AG04450 (cell line): ENCODE measurements at regions of chr1 and their contacts with region 1.

Region 1: GRCh38 chr1:112619520-112620376 is at the start of gene CAPZA1:
- DNase-seq: peak; percentile 78
- H3K4me3 ChIP-seq: peak within 1 kb of the TSS; percentile 98
- H3K27ac ChIP-seq: peak within 1 kb of the TSS; percentile 96
- H3K27me3 ChIP-seq: no peaks in the 10 kb centered on the region
- CTCF ChIP-seq: no peak
- polyA plus RNA-seq, gene CAPZA1: 195 and 273 TPM in 2 replicates

Region 2: DNA sequence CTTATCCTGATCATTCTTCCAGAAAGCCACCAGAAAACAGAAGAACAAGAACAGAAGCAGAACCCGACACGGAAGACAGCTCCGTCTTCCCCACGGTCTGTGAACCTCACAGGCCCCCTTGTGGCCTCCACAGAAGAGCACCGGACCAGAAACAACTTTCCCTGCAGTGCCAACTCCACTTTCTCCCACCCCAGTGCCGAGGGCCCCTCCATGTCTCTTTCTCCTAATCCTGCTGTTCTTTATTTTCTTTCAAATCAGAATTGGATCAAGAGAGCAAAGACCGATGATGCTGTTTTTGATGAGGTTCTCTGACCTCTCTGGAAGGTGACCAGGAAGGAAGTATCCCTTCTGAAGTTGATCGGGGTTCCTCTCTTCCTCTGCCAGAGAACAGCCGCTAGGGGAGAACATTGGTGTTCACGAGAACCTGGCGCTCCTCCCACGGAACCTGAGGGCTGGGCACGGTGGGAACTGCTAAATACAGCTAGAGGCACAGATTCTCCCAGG is 282.7 kb before region 1 on chr1:
- CTCF ChIA-PET with region 1: no interaction called
- POLR2A ChIA-PET with region 1: no interaction called
- DNase-seq: peak; percentile 11
- H3K4me3 ChIP-seq: no peak overlapping the region
- H3K27ac ChIP-seq: no peak overlapping the region
- H3K27me3 ChIP-seq: peaks cover 36% of the 10 kb centered on the region
- CTCF ChIP-seq: peak; percentile 69

Region 3: DNA sequence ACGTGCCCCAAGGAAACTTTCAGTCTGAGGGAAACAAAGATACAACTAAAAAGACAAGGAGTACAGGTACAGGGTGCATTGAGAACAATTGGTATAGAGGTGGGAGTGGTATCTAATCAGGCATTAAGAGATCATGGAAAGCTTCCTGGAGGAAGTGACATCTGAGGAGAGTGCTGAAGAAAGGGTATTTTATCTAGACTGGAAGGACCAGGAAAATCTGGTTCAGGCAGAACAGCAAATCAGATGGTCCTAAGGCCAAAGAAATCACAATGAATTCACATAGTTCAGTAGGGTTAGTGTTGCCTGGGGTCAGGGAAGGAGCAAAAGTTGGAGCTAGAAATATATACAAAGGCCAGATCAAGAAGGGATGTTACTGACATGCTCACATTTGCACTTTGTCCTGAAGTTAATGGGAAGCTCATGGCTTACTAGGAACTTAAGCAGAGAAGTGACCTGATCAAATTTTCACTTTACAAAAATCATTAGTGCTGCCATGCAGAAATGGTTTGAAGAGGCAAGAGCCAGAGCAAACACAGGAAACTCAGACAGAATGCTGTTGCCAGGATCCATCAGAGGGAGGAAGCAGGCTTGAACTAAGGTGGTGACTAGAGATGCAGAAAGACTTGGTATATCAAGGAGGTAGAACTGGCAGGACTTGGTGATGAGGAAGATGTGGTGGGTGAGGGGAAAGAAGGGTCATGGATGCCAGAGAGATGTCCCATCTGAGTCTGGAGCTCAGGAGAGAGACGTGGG is 238.2 kb before region 1 on chr1:
- CTCF ChIA-PET with region 1: no interaction called
- POLR2A ChIA-PET with region 1: no interaction called
- DNase-seq: no peak
- H3K4me3 ChIP-seq: no peak overlapping the region
- H3K27ac ChIP-seq: no peak overlapping the region
- H3K27me3 ChIP-seq: peaks cover 44% of the 10 kb centered on the region
- CTCF ChIP-seq: no peak

Region 4: DNA sequence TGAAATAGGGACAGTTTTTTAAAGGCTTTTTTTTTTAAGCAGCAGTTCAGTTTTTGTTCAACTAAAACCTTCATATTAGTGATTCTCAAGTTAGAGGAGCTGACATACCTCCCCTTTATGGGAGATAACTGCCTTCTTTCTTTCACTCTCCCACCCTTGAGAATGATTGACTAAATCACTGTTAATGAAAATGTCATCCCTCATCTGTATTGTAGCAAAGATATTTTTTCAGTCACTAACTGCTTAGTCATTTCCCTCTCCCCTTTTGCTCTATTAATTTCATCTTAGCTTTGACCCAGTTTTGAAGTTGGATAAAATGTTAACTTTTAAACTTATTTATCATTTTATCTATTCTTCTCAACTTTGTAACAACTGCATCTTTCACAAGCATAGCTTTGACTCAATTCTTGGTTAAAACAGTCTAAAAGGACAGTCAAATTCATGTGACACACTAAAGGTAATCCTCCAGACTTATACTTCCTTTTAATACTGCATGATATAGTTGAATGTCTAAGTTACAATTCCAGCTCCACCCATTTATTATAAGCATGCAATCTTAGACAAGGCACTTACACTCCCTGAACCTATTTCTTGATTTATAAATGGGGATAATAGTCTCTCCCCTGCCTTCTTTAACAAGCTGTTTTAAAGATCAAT is 17.0 kb after region 1 on chr1:
- CTCF ChIA-PET with region 1: no interaction called
- POLR2A ChIA-PET with region 1: no interaction called
- DNase-seq: no peak
- H3K4me3 ChIP-seq: no peak overlapping the region
- H3K27ac ChIP-seq: no peak overlapping the region
- H3K27me3 ChIP-seq: no peaks in the 10 kb centered on the region
- CTCF ChIP-seq: no peak

Region 5: GRCh38 chr1:112651205-112651604 is 31.5 kb after region 1 on chr1:
- CTCF ChIA-PET with region 1: interaction called, 13 read pairs
- POLR2A ChIA-PET with region 1: no interaction called
- DNase-seq: no peak
- H3K4me3 ChIP-seq: no peak overlapping the region
- H3K27ac ChIP-seq: no peak overlapping the region
- H3K27me3 ChIP-seq: no peaks in the 10 kb centered on the region
- CTCF ChIP-seq: no peak

Region 6: DNA sequence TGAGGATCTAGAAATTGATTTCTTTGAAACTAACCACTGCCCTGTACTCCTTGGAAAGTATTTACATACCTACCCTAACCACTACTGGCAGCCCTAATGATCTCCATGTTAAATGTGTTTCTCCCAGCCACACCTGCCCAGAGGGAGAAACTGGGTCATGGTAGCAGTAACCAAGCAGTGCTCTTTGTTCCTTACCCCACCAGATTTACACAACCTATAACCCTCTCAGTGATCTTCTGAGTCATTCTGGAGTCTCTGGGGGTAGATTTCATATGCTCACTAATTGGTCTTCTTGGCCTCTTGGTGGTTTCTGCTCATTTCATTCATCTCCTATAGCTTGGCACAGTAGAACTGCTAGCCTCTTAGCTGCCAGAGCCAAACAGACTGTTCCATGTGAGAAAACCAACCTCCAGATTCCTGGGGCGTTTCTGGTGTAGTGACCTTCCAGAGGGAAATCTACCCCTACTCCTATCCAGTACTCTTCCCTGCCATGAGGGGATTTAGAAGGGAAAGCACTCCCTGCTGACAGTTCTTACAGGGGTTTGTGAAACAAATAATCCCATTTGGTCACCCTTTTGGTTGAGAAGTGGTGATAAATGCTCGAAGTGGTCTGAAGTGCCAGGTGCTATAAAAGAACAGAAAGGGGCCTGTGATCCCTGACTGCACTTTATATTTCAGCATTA is 417.0 kb after region 1 on chr1:
- CTCF ChIA-PET with region 1: interaction called, 11 read pairs
- POLR2A ChIA-PET with region 1: no interaction called
- DNase-seq: no peak
- H3K4me3 ChIP-seq: no peak overlapping the region
- H3K27ac ChIP-seq: no peak overlapping the region
- H3K27me3 ChIP-seq: no peaks in the 10 kb centered on the region
- CTCF ChIP-seq: no peak

Region 7: DNA sequence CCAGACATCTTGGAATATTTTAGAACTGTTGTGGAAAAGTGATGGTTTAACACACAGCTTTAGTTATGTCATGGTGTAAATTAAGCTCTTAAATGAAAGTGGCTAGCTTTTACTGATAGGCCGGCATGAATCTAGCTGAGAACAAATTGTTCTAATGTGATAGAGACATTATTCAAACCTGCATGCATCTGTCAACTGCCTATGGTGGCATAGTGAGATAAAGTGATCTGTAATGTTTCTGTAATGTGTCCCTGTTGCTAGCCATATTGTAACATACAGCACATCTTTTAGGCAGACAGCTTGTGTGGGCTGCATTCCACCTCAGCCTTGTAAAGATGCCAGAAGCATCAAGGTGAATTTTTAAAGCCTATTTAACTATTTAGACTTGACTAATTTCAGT is 469.2 kb after region 1 on chr1:
- CTCF ChIA-PET with region 1: no interaction called
- POLR2A ChIA-PET with region 1: no interaction called
- DNase-seq: no peak
- H3K4me3 ChIP-seq: no peak overlapping the region
- H3K27ac ChIP-seq: no peak overlapping the region
- H3K27me3 ChIP-seq: no peaks in the 10 kb centered on the region
- CTCF ChIP-seq: no peak